Spleen (tissue), 13 donors: ENCODE measurements at regions of chr7 and their contacts with region 1.

Region 1: GRCh38 chr7:54201501-54201900 is 340.7 kb upstream of the VSTM2A start:
- DNase-seq: no peak
- H3K4me3 ChIP-seq: no peak overlapping the region
- H3K27ac ChIP-seq: no peak overlapping the region
- H3K4me1 ChIP-seq: no peaks in the 10 kb centered on the region
- H3K27me3 ChIP-seq: no peaks in the 10 kb centered on the region
- CTCF ChIP-seq: no peak
- POLR2A ChIP-seq: no peak

Region 2: GRCh38 chr7:54299426-54299825 is 97.9 kb after region 1 on chr7:
- intact Hi-C with region 1: loop called (anchors 5 kb)
- DNase-seq: no peak
- H3K4me3 ChIP-seq: no peak overlapping the region
- H3K27ac ChIP-seq: no peak overlapping the region
- H3K4me1 ChIP-seq: no peaks in the 10 kb centered on the region
- H3K27me3 ChIP-seq: no peaks in the 10 kb centered on the region
- CTCF ChIP-seq: no peak
- POLR2A ChIP-seq: no peak